Tibial artery (tissue), 4 donors: ENCODE measurements at regions of chr2 and their contacts with region 1.

Region 1: DNA sequence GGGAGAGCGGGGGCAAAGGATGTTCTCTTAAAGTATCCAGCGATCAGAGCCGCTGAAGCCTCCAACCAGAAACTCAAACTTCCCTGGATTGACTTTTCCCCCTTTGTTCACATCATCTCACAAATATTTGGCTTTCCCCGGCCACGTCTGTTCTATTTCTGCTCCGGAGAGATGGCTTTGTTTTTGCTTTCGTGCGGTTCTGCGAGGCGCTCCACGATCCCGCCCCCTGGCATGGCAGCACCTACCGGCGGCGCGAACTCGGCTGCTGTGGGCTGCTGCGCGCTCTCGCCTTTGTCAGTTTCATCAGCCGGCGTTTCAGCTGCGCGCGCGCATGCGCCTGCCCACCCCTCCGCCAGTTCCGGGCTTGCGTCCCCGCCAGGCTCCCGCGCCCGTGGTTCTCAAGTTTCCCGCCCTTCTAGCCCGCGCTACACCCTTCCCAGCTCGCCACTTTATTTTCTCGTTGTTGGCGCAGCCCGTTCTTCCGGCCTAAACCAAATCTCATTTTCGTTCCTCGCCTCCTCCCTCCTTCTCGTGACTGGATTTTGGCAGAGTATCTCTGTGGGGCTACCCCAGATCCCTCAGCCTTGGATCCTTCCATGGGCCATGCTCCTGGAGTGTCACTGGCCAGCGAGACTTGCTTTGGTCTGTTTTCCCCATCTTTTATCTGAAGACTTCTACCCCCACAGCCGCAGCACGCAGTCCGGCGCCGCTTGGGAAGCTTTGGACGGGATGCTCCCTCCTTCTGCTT is 98.0 kb downstream of the INSIG2 start:
- DNase-seq: peak; percentile 90 to 95
- H3K4me3 ChIP-seq: peak overlapping the region; percentile 60 to 76
- H3K27ac ChIP-seq: peak overlapping the region; percentile 86 to 88
- H3K4me1 ChIP-seq: peaks cover 0 to 18% (median 6%) of the 10 kb centered on the region in 4 donors
- H3K27me3 ChIP-seq: no peaks in the 10 kb centered on the region
- CTCF ChIP-seq: peak; percentile 10 to 13

Region 2: DNA sequence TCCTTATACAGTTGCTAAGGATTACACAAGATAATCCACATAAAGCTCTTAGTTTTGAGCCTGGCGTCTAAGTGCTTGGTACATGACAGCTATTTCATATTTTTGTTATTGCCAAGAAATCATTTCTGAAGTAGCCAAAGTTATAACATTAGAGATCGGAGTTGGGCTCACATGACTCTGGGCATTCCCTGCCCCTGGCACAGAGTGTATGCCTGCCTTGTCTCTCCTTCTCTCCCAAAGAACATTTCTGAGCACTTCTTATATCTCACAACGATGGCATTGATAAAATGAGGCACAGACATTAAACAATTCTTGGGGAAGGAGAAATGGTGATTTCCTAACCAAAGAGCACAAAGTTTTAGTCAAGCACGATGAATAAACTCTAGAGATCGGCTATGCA is 459.5 kb before region 1 on chr2:
- intact Hi-C with region 1: no loop called
- DNase-seq: no peak
- H3K4me3 ChIP-seq: no peak overlapping the region
- H3K27ac ChIP-seq: no peak overlapping the region
- H3K4me1 ChIP-seq: no peaks in the 10 kb centered on the region
- H3K27me3 ChIP-seq: no peaks in the 10 kb centered on the region
- CTCF ChIP-seq: no peak

Region 3: GRCh38 chr2:118088051-118089024 is 97.9 kb before region 1 on chr2 and contains the start of gene INSIG2:
- intact Hi-C with region 1: loop called (anchors 2 kb)
- DNase-seq: peak; percentile 92 to 95
- H3K4me3 ChIP-seq: peak within 1 kb of the TSS; percentile 84 to 89
- H3K27ac ChIP-seq: peak within 1 kb of the TSS; percentile 75 to 84
- H3K4me1 ChIP-seq: peaks cover 0 to 37% (median 14%) of the 10 kb centered on the region in 4 donors
- H3K27me3 ChIP-seq: no peaks in the 10 kb centered on the region
- CTCF ChIP-seq: no peak